ENCODE measurements at regions of chr11 and their contacts with region 1.

Region 1: DNA sequence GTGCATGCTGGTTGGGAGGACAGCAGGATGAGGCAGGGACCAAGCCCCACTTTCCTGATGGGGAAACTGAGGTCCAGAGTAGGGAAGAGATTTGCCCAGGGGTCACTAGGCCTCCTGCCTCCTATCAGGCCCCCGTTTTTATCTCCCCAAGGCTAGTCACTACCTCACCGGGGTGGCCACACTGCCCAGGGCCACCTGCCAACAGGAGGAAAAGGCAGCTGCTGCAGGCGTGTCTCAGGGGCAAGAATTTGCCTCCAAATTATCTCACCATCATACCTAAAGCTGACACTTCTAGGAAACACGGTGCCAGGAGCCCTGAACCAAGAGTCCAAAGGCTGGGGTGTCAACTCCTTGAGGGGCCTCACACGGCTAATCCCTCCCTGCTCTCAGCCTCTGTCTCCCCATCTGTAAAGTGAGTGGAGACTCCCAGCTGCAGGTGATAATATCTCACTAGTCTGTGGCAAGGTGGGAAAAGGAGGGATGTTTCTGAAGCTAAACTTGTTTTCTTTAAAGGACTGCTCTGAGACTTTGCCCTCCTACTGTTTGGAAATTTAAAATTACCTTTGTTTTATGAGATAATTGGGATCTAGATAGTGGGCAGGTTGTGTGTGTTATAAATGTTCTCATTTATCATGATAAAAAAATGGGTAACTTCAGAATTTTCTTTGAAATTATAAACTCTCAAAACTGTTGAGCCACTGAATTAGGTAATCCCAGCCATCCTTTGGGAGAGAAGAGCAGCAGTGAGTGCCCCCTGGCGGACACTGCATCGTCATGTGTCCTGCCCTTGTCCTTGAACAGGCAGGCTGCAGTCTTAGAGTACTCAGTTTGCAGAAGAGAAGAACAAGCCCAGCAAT is 60.0 kb downstream of the MYO7A start:
- DNase-seq: peak; percentile 52
- H3K4me3 Mint-ChIP-seq: no peak overlapping the region
- H3K27ac Mint-ChIP-seq: no peak overlapping the region
- H3K4me1 Mint-ChIP-seq: no peaks in the 10 kb centered on the region
- H3K27me3 Mint-ChIP-seq: peaks cover 2% of the 10 kb centered on the region

Region 2: DNA sequence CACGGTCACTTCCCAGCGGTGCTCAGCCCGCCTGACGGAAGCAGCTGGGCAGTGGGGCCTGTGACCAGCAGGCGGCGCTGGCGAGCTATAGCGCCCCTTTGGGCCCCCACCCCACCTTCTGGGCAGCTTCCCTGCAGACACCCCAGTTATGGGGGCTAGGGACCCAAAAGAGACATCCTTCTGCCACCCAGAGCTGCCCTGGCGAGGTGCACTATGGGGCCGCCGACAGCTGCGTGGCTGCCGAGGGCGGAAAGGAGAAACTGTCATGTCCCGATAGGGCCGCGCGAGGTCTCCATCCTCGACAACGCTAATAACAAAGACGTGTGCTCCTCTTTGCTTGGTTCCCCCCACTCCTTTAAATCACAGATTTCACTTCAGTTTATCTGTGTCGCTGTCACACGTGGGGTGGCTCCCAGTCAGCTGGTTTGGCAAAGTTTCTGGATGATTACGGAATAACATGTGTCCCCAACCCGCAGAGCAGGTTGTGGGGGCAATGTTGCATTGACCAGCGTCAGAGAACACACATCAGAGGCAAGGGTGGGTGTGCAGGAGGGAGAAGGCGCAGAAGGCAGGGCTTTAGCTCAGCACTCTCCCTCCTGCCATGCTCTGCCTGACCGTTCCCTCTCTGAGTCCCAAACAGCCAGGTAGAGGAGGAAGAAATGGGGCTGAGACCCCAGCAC is 60.6 kb before region 1 on chr11:
- intact Hi-C with region 1: loop called (anchors 1 kb)
- DNase-seq: peak; percentile 28
- H3K4me3 Mint-ChIP-seq: peak overlapping the region; percentile 61
- H3K27ac Mint-ChIP-seq: no peak overlapping the region
- H3K4me1 Mint-ChIP-seq: peaks cover 5% of the 10 kb centered on the region
- H3K27me3 Mint-ChIP-seq: peaks cover 4% of the 10 kb centered on the region

Region 3: DNA sequence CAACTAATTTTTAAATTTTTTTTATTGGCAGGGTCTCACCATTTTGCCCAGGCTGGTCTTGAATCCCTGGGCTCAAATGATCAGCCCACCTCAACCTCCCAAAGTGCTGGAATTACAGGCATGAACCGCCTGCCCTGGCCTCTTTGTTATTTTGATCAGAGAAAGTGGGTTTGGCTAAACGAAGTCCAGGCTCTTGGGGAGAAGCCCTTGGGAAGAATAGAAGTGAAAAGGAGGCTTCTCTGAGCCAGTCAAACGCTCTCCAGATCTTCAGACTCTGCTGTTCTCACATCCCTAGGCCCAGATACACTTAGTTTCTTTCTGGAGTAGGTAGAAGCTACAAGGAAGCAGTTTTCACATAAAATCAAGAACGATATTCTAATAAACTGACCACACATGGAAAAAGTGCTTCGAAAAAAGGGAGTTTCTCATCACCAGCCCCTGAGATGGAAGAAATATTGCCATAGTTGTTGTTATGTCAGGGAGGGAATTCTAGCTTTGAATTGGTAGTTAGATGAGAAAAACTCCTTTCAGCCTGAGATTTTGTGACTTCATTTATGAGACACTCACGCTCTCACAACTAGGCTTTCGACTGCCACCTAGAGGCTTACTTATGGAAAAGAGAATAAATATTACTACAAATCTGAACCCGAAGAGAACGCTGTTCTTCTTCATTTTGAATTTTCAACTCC is 360.0 kb after region 1 on chr11:
- intact Hi-C with region 1: loop called (anchors 1 kb)
- DNase-seq: peak; percentile 8
- H3K4me3 Mint-ChIP-seq: no peak overlapping the region
- H3K27ac Mint-ChIP-seq: no peak overlapping the region
- H3K4me1 Mint-ChIP-seq: no peaks in the 10 kb centered on the region
- H3K27me3 Mint-ChIP-seq: no peaks in the 10 kb centered on the region

Region 4: GRCh38 chr11:77619576-77620198 is 431.7 kb after region 1 on chr11:
- intact Hi-C with region 1: loop called (anchors 2 kb)
- DNase-seq: peak; percentile 5
- H3K4me3 Mint-ChIP-seq: no peak overlapping the region
- H3K27ac Mint-ChIP-seq: no peak overlapping the region
- H3K4me1 Mint-ChIP-seq: no peaks in the 10 kb centered on the region
- H3K27me3 Mint-ChIP-seq: no peaks in the 10 kb centered on the region

Measured in activated T-helper 1 cell treated with anti-CD3 and anti-CD28 coated beads, Interleukin-12 subunit alpha, Interleukin-12 subunit beta, Interleukin-2, Interleukin-4 antibody, amounts not matched to agents 30 ng/mL and 10 ng/mL and 1 ng/mL, durations not matched to agents 14 hours and 24 hours and 36 hours (primary cell).